Dendritic cell treated with granulocyte-macrophage colony-stimulating factor and Interleukin-4, amounts not matched to agents 40 ng/mL and 50 ng/mL, for 4 days (primary cell): ENCODE measurements at regions of chr22 and their contacts with region 1.

Region 1: GRCh38 chr22:40436505-40437451 is 66.4 kb downstream of the SGSM3 start:
- H3K4me3 Mint-ChIP-seq: peak overlapping the region; percentile 53
- H3K27ac Mint-ChIP-seq: peak overlapping the region; percentile 79
- H3K4me1 Mint-ChIP-seq: peaks cover 96% of the 10 kb centered on the region
- H3K27me3 Mint-ChIP-seq: no peaks in the 10 kb centered on the region

Region 2: GRCh38 chr22:40281717-40282116 is 155.1 kb before region 1 on chr22:
- intact Hi-C with region 1: no loop called
- H3K4me3 Mint-ChIP-seq: no peak overlapping the region
- H3K27ac Mint-ChIP-seq: no peak overlapping the region
- H3K4me1 Mint-ChIP-seq: no peaks in the 10 kb centered on the region
- H3K27me3 Mint-ChIP-seq: no peaks in the 10 kb centered on the region

Region 3: GRCh38 chr22:40346178-40347118 is 90.3 kb before region 1 on chr22 and contains the start of gene ADSL:
- intact Hi-C with region 1: no loop called
- H3K4me3 Mint-ChIP-seq: peak within 1 kb of the TSS; percentile 92
- H3K27ac Mint-ChIP-seq: peak within 1 kb of the TSS; percentile 93
- H3K4me1 Mint-ChIP-seq: peaks cover 28% of the 10 kb centered on the region
- H3K27me3 Mint-ChIP-seq: peaks cover 2% of the 10 kb centered on the region

Region 4: GRCh38 chr22:40463017-40463631 is 26.3 kb after region 1 on chr22:
- intact Hi-C with region 1: loop called (anchors 2 kb)
- H3K4me3 Mint-ChIP-seq: peak overlapping the region; percentile 91
- H3K27ac Mint-ChIP-seq: peak overlapping the region; percentile 89
- H3K4me1 Mint-ChIP-seq: peaks cover 61% of the 10 kb centered on the region
- H3K27me3 Mint-ChIP-seq: no peaks in the 10 kb centered on the region

Region 5: GRCh38 chr22:40487663-40488249 is 51.0 kb after region 1 on chr22:
- intact Hi-C with region 1: loop called (anchors 5 kb)
- H3K4me3 Mint-ChIP-seq: no peak overlapping the region
- H3K27ac Mint-ChIP-seq: no peak overlapping the region
- H3K4me1 Mint-ChIP-seq: peaks cover 59% of the 10 kb centered on the region
- H3K27me3 Mint-ChIP-seq: no peaks in the 10 kb centered on the region

Region 6: GRCh38 chr22:40636380-40637182 is 199.8 kb after region 1 on chr22 and contains the start of gene MRTFA:
- intact Hi-C with region 1: loop called (anchors 10 kb)
- H3K4me3 Mint-ChIP-seq: peak within 1 kb of the TSS; percentile 85
- H3K27ac Mint-ChIP-seq: peak within 1 kb of the TSS; percentile 95
- H3K4me1 Mint-ChIP-seq: peaks cover 43% of the 10 kb centered on the region
- H3K27me3 Mint-ChIP-seq: no peaks in the 10 kb centered on the region